ENCODE measurements at regions of chr20 and their contacts with region 1.

Region 1: DNA sequence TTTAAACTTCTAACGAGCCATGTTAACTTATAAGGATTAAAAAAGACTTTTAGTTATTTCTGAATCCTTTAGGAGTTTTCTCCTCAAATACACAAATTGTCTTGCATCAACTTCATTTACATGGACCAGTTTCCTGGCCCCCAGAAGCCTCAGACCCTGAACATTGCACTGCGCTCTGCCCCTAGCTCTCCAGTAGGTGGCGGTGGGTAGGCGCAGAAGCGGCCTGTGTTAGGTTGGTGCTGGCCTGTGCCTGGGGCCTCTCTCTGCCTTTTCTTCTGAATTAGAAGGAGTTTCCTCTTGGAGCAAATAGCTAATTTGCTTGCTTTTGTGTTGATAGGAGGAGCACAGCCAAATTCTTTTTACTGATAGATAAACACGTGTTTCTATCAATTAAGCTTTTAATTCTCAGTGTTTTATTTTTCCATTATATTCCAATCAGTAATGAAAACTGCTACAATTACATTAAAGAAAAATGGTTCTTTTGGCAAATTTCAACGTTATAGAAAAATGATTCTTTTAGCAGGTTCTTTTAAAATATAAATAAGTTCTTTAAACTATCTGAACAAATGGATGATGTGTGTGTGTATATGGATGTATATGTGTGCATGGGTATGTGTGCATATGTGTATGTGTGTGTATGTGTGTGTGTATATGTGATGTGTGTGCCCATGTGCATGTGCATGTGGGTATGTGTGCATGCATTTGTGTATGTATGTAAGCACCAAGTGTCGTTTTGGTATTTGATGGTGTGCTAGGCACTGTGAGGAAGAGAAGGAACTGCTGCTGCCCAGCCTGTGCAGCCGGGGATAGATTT is 44.5 kb downstream of the DTD1 start:
- DNase-seq: peak; percentile 56 to 70 (median 61)
- ATAC-seq: peak; percentile 88 to 94 (median 89)
- H3K4me3 ChIP-seq: no peak overlapping the region
- H3K27ac ChIP-seq: no peak overlapping the region
- H3K4me1 ChIP-seq: peaks cover 0 to 5% (median 0%) of the 10 kb centered on the region in 12 donors
- H3K27me3 ChIP-seq: no peaks in the 10 kb centered on the region
- CTCF ChIP-seq: peak; percentile 77 to 96 (median 86)
- POLR2A ChIP-seq: no peak

Region 2: DNA sequence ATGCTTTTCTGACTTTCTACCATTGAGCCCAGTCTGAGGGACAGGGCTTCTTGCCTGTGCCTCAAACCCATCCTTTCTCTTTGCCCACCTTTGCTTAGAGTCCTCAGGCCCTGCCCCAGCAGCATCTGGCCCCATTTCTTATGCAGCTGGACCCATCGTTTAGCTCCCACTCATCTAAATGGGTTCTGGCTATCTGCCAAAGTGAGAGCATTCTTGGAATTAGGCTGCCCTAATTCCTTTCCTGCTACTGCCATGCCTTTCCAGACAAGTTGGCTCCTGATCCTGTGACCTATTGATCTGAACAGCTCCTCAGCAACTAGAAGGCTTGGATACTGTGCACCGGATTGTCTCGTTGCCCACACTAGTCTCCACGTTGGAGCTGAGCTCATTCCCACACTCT is 188.6 kb before region 1 on chr20:
- intact Hi-C with region 1: no loop called
- DNase-seq: no peak
- ATAC-seq: no peak
- H3K4me3 ChIP-seq: no peak overlapping the region
- H3K27ac ChIP-seq: no peak overlapping the region
- H3K4me1 ChIP-seq: peaks cover 0 to 7% (median 0%) of the 10 kb centered on the region in 12 donors
- H3K27me3 ChIP-seq: no peaks in the 10 kb centered on the region
- CTCF ChIP-seq: no peak
- POLR2A ChIP-seq: no peak

Region 3: DNA sequence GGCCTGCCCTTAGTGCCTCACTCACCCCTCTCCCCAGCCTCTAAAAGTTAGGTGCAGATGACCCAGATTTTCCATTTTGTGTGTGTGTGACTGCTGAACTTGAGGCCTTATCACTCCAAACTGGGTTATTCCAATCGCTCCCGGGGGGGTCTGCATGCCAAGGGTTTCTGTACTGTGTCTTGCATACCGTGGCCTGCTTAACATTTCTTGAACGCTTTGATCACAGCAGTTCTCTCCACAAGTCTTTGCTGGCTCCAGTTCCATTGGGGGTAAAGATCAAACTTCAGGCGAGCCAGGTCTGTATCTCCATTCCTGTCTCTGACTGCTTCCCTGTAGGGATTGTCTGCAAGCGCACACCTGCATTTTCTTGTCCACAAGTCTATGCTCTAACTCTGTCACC is 37.2 kb after region 1 on chr20:
- intact Hi-C with region 1: no loop called
- DNase-seq: no peak
- ATAC-seq: no peak
- H3K4me3 ChIP-seq: no peak overlapping the region
- H3K27ac ChIP-seq: no peak overlapping the region
- H3K4me1 ChIP-seq: no peaks in the 10 kb centered on the region
- H3K27me3 ChIP-seq: no peaks in the 10 kb centered on the region
- CTCF ChIP-seq: no peak
- POLR2A ChIP-seq: no peak

Region 4: GRCh38 chr20:18801516-18801915 is 169.1 kb after region 1 on chr20:
- intact Hi-C with region 1: loop called in 2 of 10 experiments (anchors 2 to 10 kb)
- DNase-seq: no peak
- ATAC-seq: no peak
- H3K4me3 ChIP-seq: no peak overlapping the region
- H3K27ac ChIP-seq: no peak overlapping the region
- H3K4me1 ChIP-seq: no peaks in the 10 kb centered on the region
- H3K27me3 ChIP-seq: no peaks in the 10 kb centered on the region
- CTCF ChIP-seq: no peak
- POLR2A ChIP-seq: no peak

Region 5: GRCh38 chr20:19290978-19291817 is 658.8 kb after region 1 on chr20:
- intact Hi-C with region 1: no loop called
- DNase-seq: no peak
- ATAC-seq: peak in 2 of 4 donors; percentile 16 to 38
- H3K4me3 ChIP-seq: no peak overlapping the region
- H3K27ac ChIP-seq: no peak overlapping the region
- H3K4me1 ChIP-seq: peaks cover 0 to 2% (median 0%) of the 10 kb centered on the region in 12 donors
- H3K27me3 ChIP-seq: no peaks in the 10 kb centered on the region
- CTCF ChIP-seq: no peak
- POLR2A ChIP-seq: no peak

Measured in heart left ventricle (tissue), 16 donors.